ENCODE measurements at regions of chr9 and their contacts with region 1.

Region 1: GRCh38 chr9:97468658-97469448 is 32.6 kb upstream of the TMOD1 start:
- DNase-seq: peak; percentile 66
- ATAC-seq: peak; percentile 99
- H3K4me3 ChIP-seq: no peak overlapping the region
- H3K27ac ChIP-seq: no peak overlapping the region
- H3K4me1 ChIP-seq: peaks cover 6% of the 10 kb centered on the region
- H3K27me3 ChIP-seq: no peaks in the 10 kb centered on the region
- CTCF ChIP-seq: peak; percentile 84

Region 2: GRCh38 chr9:97564291-97565175 is 95.7 kb after region 1 on chr9:
- intact Hi-C with region 1: no loop called
- DNase-seq: peak; percentile 52
- ATAC-seq: peak; percentile 62
- H3K4me3 ChIP-seq: no peak overlapping the region
- H3K27ac ChIP-seq: no peak overlapping the region
- H3K4me1 ChIP-seq: peaks cover 14% of the 10 kb centered on the region
- H3K27me3 ChIP-seq: no peaks in the 10 kb centered on the region
- CTCF ChIP-seq: no peak

Region 3: GRCh38 chr9:97598461-97599288 is 129.8 kb after region 1 on chr9:
- intact Hi-C with region 1: loop called (anchors 5 kb)
- DNase-seq: no peak
- ATAC-seq: peak; percentile 93
- H3K4me3 ChIP-seq: no peak overlapping the region
- H3K27ac ChIP-seq: no peak overlapping the region
- H3K4me1 ChIP-seq: peaks cover 6% of the 10 kb centered on the region
- H3K27me3 ChIP-seq: no peaks in the 10 kb centered on the region
- CTCF ChIP-seq: peak; percentile 86

Measured in upper lobe of right lung (tissue), 1 donor.